Dendritic cell treated with granulocyte-macrophage colony-stimulating factor and Interleukin-4, amounts not matched to agents 40 ng/mL and 50 ng/mL, for 4 days (primary cell): ENCODE measurements at regions of chr18 and their contacts with region 1.

Region 1: DNA sequence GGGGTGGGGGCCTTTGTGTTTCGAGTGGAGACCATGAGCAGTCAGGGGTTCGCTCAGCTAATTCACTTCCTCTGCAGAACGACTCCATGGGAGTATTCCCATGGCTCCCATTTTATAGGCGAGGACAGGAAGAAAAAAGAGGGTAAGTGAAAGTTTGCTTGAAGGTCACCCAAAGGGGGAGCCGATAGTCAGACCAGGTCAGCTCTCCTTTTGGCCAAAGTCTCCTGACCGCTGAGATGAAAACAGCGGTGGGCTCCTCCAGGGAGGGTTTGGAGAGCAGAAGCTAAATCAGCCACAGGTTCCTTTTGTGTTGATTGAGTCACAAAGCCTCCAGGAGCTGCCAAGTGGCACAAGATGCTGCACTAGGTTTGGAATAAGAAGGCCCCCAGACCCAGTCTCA is 34.1 kb upstream of the CTAGE1 start:
- H3K4me3 Mint-ChIP-seq: no peak overlapping the region
- H3K27ac Mint-ChIP-seq: no peak overlapping the region
- H3K4me1 Mint-ChIP-seq: no peaks in the 10 kb centered on the region
- H3K27me3 Mint-ChIP-seq: no peaks in the 10 kb centered on the region

Region 2: GRCh38 chr18:22517356-22517755 is 65.6 kb after region 1 on chr18:
- intact Hi-C with region 1: loop called (anchors 10 kb)
- H3K4me3 Mint-ChIP-seq: no peak overlapping the region
- H3K27ac Mint-ChIP-seq: no peak overlapping the region
- H3K4me1 Mint-ChIP-seq: no peaks in the 10 kb centered on the region
- H3K27me3 Mint-ChIP-seq: no peaks in the 10 kb centered on the region